Endothelial cell of umbilical vein (primary cell): ENCODE measurements at regions of chr2 and their contacts with region 1.

Region 1: DNA sequence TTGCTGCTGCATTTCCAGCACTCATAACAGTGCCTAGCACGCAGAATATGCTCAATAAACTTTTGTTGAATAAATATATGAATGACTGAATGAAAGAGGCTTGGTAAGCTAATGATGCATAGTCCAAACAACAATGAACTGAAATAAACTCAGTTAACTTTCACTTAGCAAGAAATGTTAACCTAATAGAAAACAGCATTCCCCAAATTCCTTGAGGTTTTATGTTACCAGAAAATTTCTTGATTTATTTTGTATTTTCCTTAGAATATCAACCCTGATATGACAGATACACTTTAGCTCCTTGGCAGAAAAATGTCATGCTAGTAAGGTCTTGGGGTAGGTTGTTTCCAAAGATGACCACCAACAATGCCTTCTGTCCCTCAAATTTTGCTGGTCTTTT is 217.4 kb downstream of the KCNE4 start:
- DNase-seq: no peak
- H3K4me3 ChIP-seq: no peak overlapping the region
- H3K27ac ChIP-seq: no peak overlapping the region
- H3K4me1 ChIP-seq: no peaks in the 10 kb centered on the region
- H3K27me3 ChIP-seq: no peaks in the 10 kb centered on the region
- CTCF ChIP-seq: no peak
- POLR2A ChIP-seq: no peak

Region 2: GRCh38 chr2:223214394-223215253 is 54.8 kb before region 1 on chr2:
- CTCF ChIA-PET with region 1: no interaction called
- POLR2A ChIA-PET with region 1: no interaction called
- dilution Hi-C with region 1: no loop called
- intact Hi-C with region 1: no loop called
- DNase-seq: no peak
- H3K4me3 ChIP-seq: no peak overlapping the region
- H3K27ac ChIP-seq: no peak overlapping the region
- H3K4me1 ChIP-seq: no peaks in the 10 kb centered on the region
- H3K27me3 ChIP-seq: no peaks in the 10 kb centered on the region
- CTCF ChIP-seq: no peak
- POLR2A ChIP-seq: no peak

Region 3: DNA sequence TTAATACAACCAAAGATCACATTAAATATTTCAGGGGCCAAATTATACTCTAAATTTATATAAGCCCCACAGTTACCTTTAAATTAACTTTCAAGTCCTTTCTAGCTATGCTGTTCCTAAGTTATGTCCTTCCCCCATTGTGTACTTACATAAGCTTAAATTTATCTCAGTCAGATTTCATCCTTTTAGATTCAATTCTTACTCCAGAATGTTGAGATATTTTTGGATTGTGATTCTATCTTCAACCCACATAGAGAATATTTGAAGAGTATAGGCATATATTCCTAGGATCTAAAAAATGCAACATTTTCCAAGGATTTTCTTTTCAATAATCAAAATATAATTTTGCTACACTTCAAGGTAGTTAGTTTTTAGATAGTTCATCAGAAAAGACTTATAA is 25.4 kb after region 1 on chr2:
- CTCF ChIA-PET with region 1: no interaction called
- POLR2A ChIA-PET with region 1: no interaction called
- dilution Hi-C with region 1: no loop called
- intact Hi-C with region 1: loop called (anchors 1 kb)
- DNase-seq: no peak
- H3K4me3 ChIP-seq: no peak overlapping the region
- H3K27ac ChIP-seq: no peak overlapping the region
- H3K4me1 ChIP-seq: no peaks in the 10 kb centered on the region
- H3K27me3 ChIP-seq: no peaks in the 10 kb centered on the region
- CTCF ChIP-seq: no peak
- POLR2A ChIP-seq: no peak